ENCODE measurements at regions of chr1 and their contacts with region 1.

Region 1: GRCh38 chr1:41516168-41517061 is 31.9 kb upstream of the EDN2 start:
- DNase-seq: peak; percentile 92
- H3K4me3 Mint-ChIP-seq: no peak overlapping the region
- H3K27ac Mint-ChIP-seq: peak overlapping the region; percentile 58
- H3K4me1 Mint-ChIP-seq: peaks cover 7% of the 10 kb centered on the region
- H3K27me3 Mint-ChIP-seq: no peaks in the 10 kb centered on the region

Region 2: DNA sequence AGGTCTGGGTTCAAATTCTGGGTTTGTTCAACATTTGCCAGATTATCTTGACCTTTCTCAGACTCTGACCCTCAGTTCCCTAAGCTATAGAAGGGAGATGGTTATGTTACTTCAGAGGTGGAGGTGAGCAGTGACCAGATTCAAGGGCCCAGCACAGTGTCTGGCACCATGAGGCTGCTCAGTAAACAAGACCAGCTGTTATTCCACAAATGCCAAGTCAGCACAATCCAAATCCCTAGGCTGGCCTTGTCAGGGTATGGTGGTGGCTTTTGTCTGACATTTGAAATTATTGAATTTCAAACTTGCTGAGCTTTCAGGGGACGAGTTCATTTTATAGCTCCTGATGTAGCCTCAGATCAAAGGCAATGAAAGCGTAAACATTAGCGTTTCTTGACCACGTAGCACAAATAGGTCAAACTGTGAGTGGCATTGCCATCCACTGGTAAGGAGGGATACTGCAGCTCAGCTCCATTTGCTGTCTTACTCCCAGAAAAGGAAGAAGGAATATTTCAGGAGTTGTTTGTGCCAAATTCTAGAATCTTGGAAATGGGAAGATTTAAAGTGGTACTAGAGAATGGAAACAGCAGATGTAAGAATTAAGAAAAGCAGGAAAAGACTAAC is 62.4 kb after region 1 on chr1:
- intact Hi-C with region 1: no loop called
- DNase-seq: no peak
- H3K4me3 Mint-ChIP-seq: no peak overlapping the region
- H3K27ac Mint-ChIP-seq: no peak overlapping the region
- H3K4me1 Mint-ChIP-seq: peaks cover 50% of the 10 kb centered on the region
- H3K27me3 Mint-ChIP-seq: no peaks in the 10 kb centered on the region

Region 3: GRCh38 chr1:41891199-41891896 is 374.9 kb after region 1 on chr1:
- intact Hi-C with region 1: loop called (anchors 10 kb)
- DNase-seq: peak; percentile 91
- H3K4me3 Mint-ChIP-seq: peak overlapping the region; percentile 84
- H3K27ac Mint-ChIP-seq: peak overlapping the region; percentile 94
- H3K4me1 Mint-ChIP-seq: peaks cover 60% of the 10 kb centered on the region
- H3K27me3 Mint-ChIP-seq: no peaks in the 10 kb centered on the region

Region 4: DNA sequence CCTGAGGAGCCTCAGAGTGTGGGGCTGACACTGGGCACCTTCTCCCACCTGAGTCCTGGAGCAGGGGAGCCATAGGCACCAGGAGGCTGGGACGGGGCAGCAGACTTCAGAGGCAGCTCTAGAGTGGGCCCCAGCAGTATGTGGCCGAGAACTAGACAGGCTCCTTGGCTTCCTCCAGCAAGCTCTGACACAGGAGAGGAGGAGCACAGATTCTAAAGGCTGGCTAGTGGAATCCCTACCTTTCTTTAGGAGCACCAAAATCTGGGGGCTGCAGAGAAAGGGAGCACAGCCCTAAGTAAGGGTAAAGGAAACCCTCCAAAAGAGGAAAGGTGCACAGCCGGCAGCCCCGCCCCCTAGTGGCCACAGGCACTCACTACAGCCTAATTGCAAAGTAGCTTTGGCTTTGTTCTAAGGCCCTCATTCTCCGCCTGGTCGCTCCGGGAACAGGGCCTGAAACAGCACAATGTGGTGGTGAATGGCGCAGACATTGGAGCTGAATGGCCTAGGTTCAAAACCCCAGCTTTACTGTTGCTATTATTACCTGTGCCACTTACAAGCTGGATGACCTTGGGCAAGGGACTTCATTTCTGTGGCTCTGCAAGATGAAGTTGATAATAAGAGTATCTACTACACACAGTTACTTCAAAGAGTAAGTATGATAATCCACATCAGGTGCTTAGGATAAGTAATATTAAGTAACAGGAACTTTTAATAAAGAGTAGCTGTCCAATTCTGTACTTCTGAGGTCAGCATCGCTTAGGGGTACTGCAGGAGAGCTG is 656.9 kb after region 1 on chr1:
- intact Hi-C with region 1: loop called (anchors 10 kb)
- DNase-seq: peak; percentile 89
- H3K4me3 Mint-ChIP-seq: no peak overlapping the region
- H3K27ac Mint-ChIP-seq: no peak overlapping the region
- H3K4me1 Mint-ChIP-seq: no peaks in the 10 kb centered on the region
- H3K27me3 Mint-ChIP-seq: no peaks in the 10 kb centered on the region